H1 (cell line): ENCODE measurements at regions of chr2 and their contacts with region 1.

Region 1: GRCh38 chr2:3692381-3692780 is 11.0 kb upstream of the DCDC2C start:
- DNase-seq: peak in 1 of 2 experiments; percentile 48
- H3K4me3 ChIP-seq: no peak overlapping the region
- H3K27ac ChIP-seq: no peak overlapping the region
- H3K4me1 ChIP-seq: no peaks in the 10 kb centered on the region
- H3K27me3 ChIP-seq: no peaks in the 10 kb centered on the region; a peak in 1 of 7 replicates
- CTCF ChIP-seq: peak in 2 of 3 experiments; percentile 67 to 75; a peak in 3 of 4 replicates
- EP300 ChIP-seq: no peak
- POLR2A ChIP-seq: no peak
- RAD21 ChIP-seq: peak; percentile 94

Region 2: DNA sequence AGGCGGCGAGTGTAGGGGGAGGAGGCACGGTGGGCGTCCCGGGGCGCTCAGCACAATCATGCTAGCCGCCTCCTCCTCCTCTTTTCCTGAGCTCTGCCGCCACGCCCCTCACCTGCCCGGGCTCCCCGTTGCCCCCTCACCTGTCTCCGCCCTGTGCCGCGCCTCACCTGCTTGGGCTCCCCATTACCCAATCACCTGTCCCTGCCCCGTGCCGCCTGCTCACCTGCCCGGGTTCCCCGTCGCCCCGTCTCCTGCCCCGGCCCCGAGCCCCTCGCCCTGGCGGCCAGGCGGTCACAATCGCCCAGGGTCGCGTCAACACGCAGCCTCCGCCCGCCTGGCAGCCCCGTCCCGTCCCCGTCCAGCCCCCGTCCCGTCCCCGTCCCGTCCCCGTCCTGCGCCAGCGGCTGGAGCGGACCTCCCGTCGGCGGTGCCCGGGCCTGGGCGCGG is 10.9 kb after region 1 on chr2 and contains the start of gene DCDC2C:
- CTCF ChIA-PET with region 1: interaction called, 24 read pairs
- POLR2A ChIA-PET with region 1: no interaction called
- DNase-seq: no peak
- H3K4me3 ChIP-seq: peak within 1 kb of the TSS; percentile 18 to 62 (median 34); a peak in 7 of 8 replicates
- H3K27ac ChIP-seq: no peak within 1 kb of the TSS
- H3K4me1 ChIP-seq: peaks cover 0 to 3% (median 1%) of the 10 kb centered on the region in 4 experiments; a peak in 4 of 7 replicates
- H3K27me3 ChIP-seq: peaks cover 5 to 17% (median 9%) of the 10 kb centered on the region in 4 experiments; a peak in 6 of 7 replicates
- CTCF ChIP-seq: no peak
- EP300 ChIP-seq: no peak
- POLR2A ChIP-seq: no peak
- RAD21 ChIP-seq: no peak
- total RNA-seq, gene DCDC2C: not detected in 2 replicates